ENCODE measurements at regions of chr17 and their contacts with region 1.

Region 1: DNA sequence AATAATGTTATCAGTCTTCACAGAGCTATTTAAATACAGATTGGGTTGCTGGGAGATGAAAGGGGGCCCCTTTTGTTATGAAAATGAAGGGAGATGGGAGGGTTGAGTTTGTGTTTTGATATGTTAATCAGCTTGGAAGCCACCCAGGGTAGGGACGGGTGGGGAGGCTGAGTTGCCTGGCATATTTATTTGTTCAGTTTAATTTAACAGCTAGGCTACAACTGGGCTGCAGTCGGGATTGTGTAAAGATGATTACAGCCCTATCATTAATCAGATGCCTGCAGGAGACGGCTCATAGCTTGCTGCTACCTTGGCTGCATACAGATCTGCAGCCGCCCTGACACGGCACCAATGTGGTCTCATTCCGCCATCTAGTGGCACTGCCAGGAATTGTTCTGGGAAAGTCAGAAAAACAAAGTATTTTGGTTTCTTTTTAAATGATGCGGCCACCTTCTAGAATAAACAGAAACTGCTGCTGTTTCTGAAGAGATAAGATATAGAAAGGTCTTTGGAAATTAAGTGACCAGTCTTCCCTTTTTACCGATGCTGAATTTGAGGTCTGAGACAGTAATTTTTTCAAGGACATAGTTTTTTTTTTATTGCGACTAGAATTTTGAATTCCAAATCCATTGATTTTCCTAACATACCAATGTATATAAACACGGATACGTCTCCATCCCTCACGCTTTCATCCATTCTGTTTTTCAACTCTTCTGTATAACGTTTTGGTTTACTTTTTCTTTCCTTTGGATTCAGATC is 458.0 kb upstream of the ASIC2 start:
- DNase-seq: peak; percentile 80
- ATAC-seq: peak; percentile 47
- H3K4me3 Mint-ChIP-seq: no peak overlapping the region
- H3K27ac Mint-ChIP-seq: no peak overlapping the region
- H3K4me1 Mint-ChIP-seq: peaks cover 5% of the 10 kb centered on the region
- H3K27me3 Mint-ChIP-seq: peaks cover 35% of the 10 kb centered on the region

Region 2: DNA sequence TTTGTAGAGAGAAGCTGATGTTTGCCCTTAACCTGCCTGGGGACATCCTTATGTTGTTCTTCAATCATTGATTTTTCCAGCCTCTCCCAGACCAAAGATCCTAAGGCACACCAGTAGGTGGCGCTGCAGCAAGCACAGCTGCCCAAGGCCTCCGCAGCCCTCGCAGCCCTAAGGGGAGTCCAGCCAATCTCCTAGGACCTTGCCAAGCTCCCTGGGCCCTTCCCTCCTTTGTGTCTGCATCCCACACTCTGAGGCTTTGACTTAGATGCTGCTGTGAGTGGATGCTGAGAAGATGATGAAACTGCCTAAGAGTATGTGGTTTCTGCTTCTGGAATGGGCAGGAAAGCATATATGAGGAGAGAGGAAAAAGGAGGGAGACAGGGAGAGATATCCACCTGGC is 712.4 kb before region 1 on chr17:
- CTCF ChIA-PET with region 1: no interaction called
- POLR2A ChIA-PET with region 1: no interaction called
- intact Hi-C with region 1: loop called in 1 of 2 experiments (anchors 1 kb)
- DNase-seq: peak; percentile 54
- ATAC-seq: peak; percentile 55
- H3K4me3 Mint-ChIP-seq: no peak overlapping the region
- H3K27ac Mint-ChIP-seq: no peak overlapping the region
- H3K4me1 Mint-ChIP-seq: no peaks in the 10 kb centered on the region
- H3K27me3 Mint-ChIP-seq: peaks cover 33% of the 10 kb centered on the region

Region 3: DNA sequence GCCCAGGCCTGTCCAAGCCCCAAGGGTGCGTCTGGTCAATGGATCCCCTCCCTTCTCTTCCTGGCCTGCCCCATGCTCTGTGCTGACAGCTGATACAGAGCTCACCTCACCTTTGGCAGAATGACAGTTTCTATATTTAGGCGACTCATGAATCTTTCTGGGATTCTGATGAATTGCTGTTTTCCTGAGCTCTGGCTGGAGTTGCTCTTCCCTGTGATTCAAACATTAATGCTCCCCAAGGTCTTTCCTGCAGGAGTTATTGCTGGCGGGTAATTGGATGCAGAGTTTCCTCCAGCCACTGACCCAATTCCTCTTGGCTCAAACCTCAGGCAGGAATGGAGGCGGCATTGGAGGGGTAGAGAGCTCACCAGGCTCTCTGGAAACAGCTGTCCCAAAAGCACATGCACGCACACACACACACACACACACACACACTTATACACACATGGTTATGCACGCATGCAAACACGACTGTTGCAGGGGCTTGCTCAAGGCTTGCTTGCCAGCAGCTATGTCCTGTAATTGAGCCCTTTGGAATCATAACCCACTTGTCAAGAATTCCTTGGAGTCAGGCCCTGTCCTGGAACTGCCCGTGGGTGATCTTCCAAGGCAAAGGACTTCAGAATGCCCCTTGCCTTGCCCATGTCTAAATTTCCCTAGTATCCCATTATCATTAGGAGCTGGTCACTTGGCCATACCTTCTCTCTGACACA is 586.8 kb before region 1 on chr17:
- CTCF ChIA-PET with region 1: no interaction called
- POLR2A ChIA-PET with region 1: no interaction called
- intact Hi-C with region 1: no loop called
- DNase-seq: no peak
- ATAC-seq: no peak
- H3K4me3 Mint-ChIP-seq: no peak overlapping the region
- H3K27ac Mint-ChIP-seq: no peak overlapping the region
- H3K4me1 Mint-ChIP-seq: no peaks in the 10 kb centered on the region
- H3K27me3 Mint-ChIP-seq: peaks cover 19% of the 10 kb centered on the region

Region 4: DNA sequence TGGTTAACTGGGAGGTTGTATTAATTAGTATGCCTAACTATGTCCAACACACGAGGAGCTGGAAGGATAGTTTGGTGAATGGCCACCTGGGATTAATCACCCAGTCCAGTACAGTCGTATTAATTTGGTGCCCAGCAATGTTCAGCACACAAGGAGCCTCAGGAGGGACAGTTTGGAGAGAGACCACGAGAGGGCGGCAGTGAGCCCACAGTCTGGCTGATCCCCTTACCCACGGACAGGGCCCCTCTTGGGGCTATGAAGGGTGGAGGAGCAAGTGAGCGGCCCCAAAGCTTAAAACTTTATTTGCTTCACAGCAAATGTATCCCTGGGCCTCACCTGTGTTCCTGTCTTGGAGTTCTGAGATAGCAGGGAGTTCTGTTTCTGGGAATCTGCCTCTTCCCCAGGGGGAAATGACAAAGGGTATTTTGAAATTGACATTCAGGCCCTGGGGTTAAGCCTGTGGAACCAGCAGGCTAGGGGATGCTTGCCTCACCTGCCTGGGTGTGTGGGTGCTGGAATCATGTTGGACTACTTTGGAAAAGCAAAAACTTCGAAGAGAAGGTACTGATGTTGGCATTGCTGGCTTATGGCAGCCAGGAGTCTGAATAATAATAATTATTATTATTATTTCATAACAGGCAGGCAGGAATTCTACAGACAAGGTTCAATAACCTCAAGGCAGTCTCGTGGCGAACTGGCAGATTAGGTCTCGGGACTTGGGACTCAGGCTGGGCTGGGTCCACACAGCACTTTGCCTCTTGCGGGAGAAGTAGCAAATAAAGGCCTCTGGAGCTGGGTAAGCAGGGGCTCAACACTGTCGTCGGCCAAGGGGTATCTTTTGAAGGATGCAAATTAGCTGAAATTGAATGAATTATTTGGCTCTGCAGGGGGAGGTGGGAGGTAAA is 230.4 kb before region 1 on chr17:
- CTCF ChIA-PET with region 1: interaction called, 4 read pairs
- POLR2A ChIA-PET with region 1: no interaction called
- intact Hi-C with region 1: loop called (anchors 1 kb)
- DNase-seq: peak; percentile 76
- ATAC-seq: peak; percentile 55
- H3K4me3 Mint-ChIP-seq: no peak overlapping the region
- H3K27ac Mint-ChIP-seq: no peak overlapping the region
- H3K4me1 Mint-ChIP-seq: no peaks in the 10 kb centered on the region
- H3K27me3 Mint-ChIP-seq: no peaks in the 10 kb centered on the region

Region 5: GRCh38 chr17:33725675-33726271 is 25.3 kb before region 1 on chr17:
- CTCF ChIA-PET with region 1: interaction called, 13 read pairs
- POLR2A ChIA-PET with region 1: no interaction called
- intact Hi-C with region 1: loop called in 1 of 2 experiments (anchors 1 kb)
- DNase-seq: peak; percentile 53
- ATAC-seq: no peak
- H3K4me3 Mint-ChIP-seq: no peak overlapping the region
- H3K27ac Mint-ChIP-seq: no peak overlapping the region
- H3K4me1 Mint-ChIP-seq: no peaks in the 10 kb centered on the region
- H3K27me3 Mint-ChIP-seq: peaks cover 12% of the 10 kb centered on the region